ENCODE measurements at regions of chr11 and their contacts with region 1.

Region 1: DNA sequence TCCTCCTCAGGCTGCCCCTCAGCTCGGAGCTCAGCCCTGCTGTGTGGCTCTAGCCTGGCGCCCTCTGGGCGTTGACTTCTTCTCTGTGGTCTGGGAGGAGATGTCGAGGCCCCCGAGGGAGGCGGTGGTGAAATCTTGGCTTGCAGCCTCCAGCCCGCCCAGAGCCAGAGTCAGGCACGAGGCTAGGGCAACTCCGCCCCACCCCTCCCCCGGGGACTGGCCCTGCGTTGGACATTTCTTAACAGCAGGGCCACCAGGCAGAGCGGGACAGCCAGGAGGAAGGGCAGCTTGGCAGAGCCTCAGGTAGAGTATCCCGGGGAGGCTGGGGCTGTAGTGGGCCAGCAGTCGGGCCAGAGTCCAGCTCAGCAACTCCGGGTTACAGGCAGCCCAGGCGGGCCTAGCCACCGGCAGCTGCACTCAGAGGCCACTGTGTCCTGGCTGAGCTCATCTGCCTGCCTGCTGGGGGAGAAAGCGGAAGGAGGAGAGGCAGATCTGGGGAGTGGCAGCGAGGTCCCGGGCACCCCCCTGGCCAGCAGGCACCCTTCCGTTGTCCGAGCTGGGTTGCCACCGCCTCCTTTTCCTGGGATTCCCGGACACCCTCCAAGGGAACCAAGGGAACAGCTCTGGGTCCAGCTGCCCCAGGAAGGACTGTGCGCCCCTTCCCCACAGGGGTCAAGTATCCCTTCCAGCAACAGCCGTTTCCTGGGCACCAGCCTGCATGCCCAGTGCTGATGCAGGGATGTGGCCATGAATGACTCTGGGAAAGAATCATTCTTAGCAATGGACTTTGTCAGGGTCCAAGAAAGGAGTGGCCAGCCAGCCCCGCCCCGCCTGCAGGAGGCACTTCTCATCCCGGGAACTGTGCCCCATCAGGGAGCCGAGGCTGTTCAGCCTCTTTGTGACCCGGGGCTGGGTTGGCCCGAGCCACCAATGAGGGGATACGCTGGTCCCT is at the start of gene ALDH3B1:
- DNase-seq: peak; percentile 97
- ATAC-seq: peak; percentile 87
- H3K4me3 ChIP-seq: no peak within 1 kb of the TSS
- H3K27ac ChIP-seq: peak within 1 kb of the TSS in 1 of 2 donors; percentile 61
- H3K4me1 ChIP-seq: no peaks in the 10 kb centered on the region
- H3K27me3 ChIP-seq: no peaks in the 10 kb centered on the region
- total RNA-seq, gene ALDH3B1: 10.9 to 12.4 TPM

Region 2: GRCh38 chr11:68030318-68031138 is 20.2 kb after region 1 on chr11 and contains the start of gene NDUFS8:
- intact Hi-C with region 1: loop called in 1 of 2 experiments (anchors 2 kb)
- DNase-seq: peak; percentile 96 to 99
- ATAC-seq: peak; percentile 96
- H3K4me3 ChIP-seq: peak within 1 kb of the TSS; percentile 44 to 71
- H3K27ac ChIP-seq: peak within 1 kb of the TSS in 1 of 2 donors; percentile 37
- H3K4me1 ChIP-seq: no peaks in the 10 kb centered on the region
- H3K27me3 ChIP-seq: no peaks in the 10 kb centered on the region
- total RNA-seq, gene NDUFS8: 70.1 to 76.7 TPM

Region 3: DNA sequence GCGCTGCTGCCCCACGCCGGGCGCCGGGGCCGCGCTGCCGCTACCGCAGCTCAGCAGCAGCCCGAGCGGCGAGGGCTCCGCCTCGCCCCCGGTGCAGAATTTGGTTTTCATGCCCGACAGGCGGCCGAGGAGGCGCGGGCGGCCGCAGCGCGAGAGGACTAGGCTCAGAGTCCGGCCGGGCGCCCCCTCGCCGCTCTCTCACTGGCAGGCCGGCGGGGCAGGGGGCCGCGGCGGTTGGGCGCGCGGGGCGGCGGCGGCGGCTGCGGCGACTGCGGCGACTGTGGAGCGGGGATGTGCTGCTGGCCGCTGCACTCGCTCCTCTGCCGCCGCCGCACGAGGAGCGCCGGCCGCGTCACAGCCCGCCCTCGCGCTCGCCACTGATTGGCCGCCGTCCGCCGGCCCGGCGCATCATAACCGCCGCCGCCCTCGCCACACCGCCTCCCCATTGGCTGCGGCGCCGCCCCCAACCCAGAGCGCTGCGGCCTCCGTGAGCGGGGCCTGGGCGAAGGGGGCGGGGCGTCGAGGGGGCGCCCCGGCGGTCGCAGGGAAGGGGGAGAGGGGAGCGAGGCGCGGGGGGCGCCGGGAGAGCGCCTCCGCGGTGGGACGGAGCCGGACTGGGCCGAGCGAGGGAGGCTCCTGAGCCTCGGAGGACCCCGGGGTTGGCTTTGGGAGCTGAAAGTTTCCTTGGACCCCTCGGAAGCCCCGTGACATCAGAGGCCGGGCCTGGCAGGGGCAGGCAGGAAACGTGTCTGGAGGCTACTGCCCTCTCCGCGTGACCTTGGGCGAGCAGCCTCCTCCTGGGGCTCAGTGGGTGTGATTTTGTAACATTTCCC is 110.9 kb after region 1 on chr11 and contains the start of gene CHKA:
- intact Hi-C with region 1: loop called in 1 of 2 experiments (anchors 5 kb)
- DNase-seq: peak; percentile 95 to 97
- ATAC-seq: peak; percentile 98
- H3K4me3 ChIP-seq: peak within 1 kb of the TSS; percentile 66 to 86
- H3K27ac ChIP-seq: peak within 1 kb of the TSS; percentile 76 to 86
- H3K4me1 ChIP-seq: no peaks in the 10 kb centered on the region
- H3K27me3 ChIP-seq: no peaks in the 10 kb centered on the region
- total RNA-seq, gene CHKA: 15.2 to 19.9 TPM